Activated CD8-positive, alpha-beta T cell treated with anti-CD3 and anti-CD28 coated beads for 36 hours (primary cell): ENCODE measurements at regions of chr11 and their contacts with region 1.

Region 1: DNA sequence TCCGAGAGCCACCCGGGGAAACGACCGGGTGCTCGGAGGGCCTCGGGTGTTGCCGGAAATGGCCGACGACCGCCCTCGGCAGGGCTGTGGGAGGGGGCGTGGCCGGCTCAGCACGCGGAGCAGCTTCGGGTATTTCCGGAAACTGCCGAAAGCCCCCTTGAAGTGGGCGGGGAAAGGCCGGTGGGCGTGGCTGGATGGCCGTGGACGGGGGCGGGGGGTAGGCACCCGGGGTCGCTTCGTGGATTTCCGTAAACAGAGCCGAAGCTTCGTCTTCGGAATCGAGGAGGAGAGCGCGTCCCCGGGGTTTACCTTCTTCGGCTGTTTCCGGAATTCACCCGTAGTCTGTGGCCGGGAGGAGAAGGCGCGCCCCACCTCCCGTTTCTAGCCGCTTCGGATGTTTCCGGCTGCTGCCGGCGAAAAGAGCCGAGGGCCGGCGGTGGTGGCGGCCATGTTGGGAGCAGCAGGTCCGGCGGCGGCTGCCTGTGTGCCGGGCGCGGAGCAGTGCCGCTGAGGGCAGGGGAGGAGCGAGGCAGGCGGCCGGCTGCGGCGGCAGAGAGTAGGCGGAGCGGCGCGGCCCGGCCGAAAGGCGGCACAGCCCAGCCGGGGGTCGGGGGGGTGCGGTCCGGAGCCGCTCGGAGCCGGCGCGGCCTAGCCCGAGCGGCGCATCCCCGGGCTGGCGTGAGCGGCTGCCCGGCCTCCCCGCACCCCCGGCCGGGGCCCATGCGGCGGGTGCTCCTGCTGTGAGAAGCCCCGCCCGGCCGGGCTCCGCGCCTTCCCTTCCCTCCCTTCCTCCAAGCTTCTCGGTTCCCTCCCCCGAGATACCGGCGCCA is at the start of gene MARK2:
- DNase-seq: peak; percentile 99
- ATAC-seq: peak; percentile 90
- H3K4me3 Mint-ChIP-seq: peak within 1 kb of the TSS; percentile 98
- H3K27ac Mint-ChIP-seq: peak within 1 kb of the TSS; percentile 93
- H3K4me1 Mint-ChIP-seq: peaks cover 46% of the 10 kb centered on the region
- H3K27me3 Mint-ChIP-seq: no peaks in the 10 kb centered on the region
- CTCF ChIP-seq: no peak
- total RNA-seq, gene MARK2: 23.3 to 24.5 TPM

Region 2: DNA sequence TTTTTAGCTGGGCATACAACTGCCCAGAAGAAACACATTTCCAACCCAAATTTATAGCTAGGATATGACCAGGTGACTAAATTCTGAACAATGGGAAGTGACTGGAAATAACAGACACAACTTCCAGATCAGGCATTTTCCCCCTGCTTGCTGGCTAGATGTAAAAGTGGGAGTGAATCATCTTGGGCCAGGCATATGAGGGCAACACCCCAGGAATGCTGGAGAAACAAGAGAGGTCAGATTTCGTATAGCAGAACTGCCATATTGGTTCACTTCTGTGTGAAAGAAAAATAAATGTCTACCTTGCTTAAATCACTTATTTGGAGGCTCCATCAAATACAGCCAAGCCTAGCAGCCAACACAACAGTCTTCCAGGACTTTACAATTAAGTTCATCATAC is 175.1 kb before region 1 on chr11:
- CTCF ChIA-PET with region 1: no interaction called
- POLR2A ChIA-PET with region 1: no interaction called
- intact Hi-C with region 1: no loop called
- DNase-seq: no peak
- ATAC-seq: no peak
- H3K4me3 Mint-ChIP-seq: no peak overlapping the region
- H3K27ac Mint-ChIP-seq: no peak overlapping the region
- H3K4me1 Mint-ChIP-seq: peaks cover 31% of the 10 kb centered on the region
- H3K27me3 Mint-ChIP-seq: no peaks in the 10 kb centered on the region
- CTCF ChIP-seq: no peak

Region 3: DNA sequence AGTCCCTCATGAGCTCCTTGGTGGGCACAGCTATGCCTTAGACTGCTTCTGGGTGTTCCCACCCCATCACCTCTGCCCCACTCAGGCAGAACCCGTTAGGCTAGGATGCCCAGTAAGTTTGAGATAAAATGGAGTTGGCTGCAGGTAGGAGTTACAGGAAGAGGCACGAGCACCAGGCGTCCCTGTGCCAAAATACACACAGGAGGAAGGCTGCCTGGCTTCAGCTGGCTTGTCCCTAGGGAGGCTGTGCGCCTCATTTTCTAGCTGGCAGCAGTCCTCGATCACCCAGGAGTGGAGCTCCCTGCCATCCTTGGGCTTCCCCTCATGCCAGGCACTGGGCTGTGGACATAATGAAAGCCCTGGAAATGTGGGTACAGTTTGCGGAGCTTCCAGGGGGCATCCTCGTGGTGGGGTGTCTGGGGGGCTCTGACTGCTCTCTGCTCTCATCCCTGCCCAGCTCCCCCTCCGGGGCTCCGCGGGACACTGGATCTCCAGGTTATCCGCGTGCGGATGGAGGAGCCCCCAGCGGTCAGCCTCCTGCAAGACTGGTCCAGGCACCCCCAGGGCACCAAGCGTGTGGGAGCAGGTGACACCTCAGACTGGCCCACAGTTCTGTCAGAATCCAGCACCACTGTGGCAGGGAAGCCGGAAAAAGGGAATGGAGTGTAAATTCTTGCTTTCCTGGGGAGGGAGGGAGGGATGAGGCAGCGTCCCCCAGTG is 12.3 kb before region 1 on chr11:
- CTCF ChIA-PET with region 1: interaction called, 13 read pairs
- POLR2A ChIA-PET with region 1: no interaction called
- intact Hi-C with region 1: no loop called
- DNase-seq: no peak
- ATAC-seq: no peak
- H3K4me3 Mint-ChIP-seq: no peak overlapping the region
- H3K27ac Mint-ChIP-seq: no peak overlapping the region
- H3K4me1 Mint-ChIP-seq: no peaks in the 10 kb centered on the region
- H3K27me3 Mint-ChIP-seq: no peaks in the 10 kb centered on the region
- CTCF ChIP-seq: no peak

Region 4: GRCh38 chr11:63871962-63872799 is 33.3 kb after region 1 on chr11:
- CTCF ChIA-PET with region 1: interaction called, 15 read pairs
- POLR2A ChIA-PET with region 1: interaction called, 3 read pairs
- intact Hi-C with region 1: loop called (anchors 5 kb)
- DNase-seq: peak; percentile 61
- ATAC-seq: peak; percentile 85
- H3K4me3 Mint-ChIP-seq: no peak overlapping the region
- H3K27ac Mint-ChIP-seq: peak overlapping the region; percentile 45
- H3K4me1 Mint-ChIP-seq: peaks cover 84% of the 10 kb centered on the region
- H3K27me3 Mint-ChIP-seq: no peaks in the 10 kb centered on the region
- CTCF ChIP-seq: no peak

Region 5: DNA sequence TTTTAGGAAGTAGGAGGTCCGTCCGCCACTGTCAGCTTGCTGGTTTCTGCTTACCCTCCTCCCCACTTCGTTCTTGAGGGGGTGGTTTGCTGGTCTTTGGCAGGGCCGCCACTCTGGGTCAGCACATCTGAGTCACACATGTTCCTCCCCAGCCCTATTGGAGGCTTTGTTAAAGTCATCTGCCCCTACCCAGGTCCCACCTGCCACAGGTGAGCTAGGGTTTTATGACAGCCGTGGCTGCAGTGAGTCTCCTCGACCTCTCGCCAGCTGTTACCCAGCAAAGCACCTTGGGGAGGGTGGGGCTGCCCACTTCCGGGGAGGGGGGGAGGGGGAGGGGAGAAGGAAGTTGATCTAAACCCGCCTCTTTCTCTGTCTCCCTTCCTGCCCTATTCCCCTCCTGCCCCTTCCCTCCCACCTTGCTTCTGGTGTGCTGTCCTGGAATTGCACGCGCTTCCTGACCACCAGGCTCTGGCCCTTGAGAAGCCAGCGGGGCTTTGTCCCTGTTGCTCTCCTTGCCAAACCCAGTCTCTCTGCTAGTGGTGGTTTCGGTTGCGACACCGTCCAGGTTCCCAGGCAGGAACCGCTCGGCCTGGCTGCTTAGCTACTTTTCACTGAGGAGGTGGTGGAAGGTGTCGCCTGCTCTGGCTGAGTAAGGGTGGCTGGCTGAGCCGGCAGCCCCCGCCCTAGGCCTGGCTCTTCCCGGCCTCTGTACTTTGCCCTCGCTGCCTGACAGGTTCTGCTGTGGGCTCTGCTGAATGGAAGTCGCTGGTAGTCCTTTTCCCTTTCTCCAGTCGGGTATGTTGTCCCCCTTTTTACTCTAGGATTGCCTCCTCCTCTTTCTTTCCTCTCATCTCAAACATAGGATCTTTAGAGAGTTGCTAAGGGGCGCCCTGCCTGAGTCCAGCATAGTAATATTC is 49.5 kb after region 1 on chr11:
- CTCF ChIA-PET with region 1: interaction called, 23 read pairs
- POLR2A ChIA-PET with region 1: interaction called, 9 read pairs
- intact Hi-C with region 1: loop called (anchors 10 kb)
- DNase-seq: peak; percentile 77
- ATAC-seq: peak; percentile 80
- H3K4me3 Mint-ChIP-seq: peak overlapping the region; percentile 86
- H3K27ac Mint-ChIP-seq: peak overlapping the region; percentile 93
- H3K4me1 Mint-ChIP-seq: peaks cover 75% of the 10 kb centered on the region
- H3K27me3 Mint-ChIP-seq: no peaks in the 10 kb centered on the region
- CTCF ChIP-seq: no peak

Region 6: DNA sequence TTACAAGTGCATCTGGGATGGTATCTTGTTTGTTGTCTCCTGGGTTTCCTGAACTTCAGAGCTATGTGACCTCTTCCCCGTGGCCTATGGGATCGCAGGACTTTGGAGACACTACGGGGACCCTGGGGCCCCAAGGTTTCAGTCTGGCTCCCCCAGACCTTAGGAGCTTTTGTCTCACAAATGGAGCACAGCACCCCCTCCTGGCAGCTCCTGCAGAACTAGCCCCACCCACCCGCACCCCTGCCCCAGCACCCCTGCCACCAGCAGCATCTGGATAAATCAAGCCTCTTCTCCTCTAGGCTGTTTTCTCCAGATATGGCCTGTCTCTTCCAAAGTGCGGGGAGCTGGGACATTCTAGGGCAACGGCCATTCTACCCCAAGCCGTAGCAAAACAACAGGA is 67.7 kb after region 1 on chr11:
- CTCF ChIA-PET with region 1: interaction called, 38 read pairs
- POLR2A ChIA-PET with region 1: interaction called, 9 read pairs
- intact Hi-C with region 1: no loop called
- DNase-seq: peak; percentile 70
- ATAC-seq: peak; percentile 74
- H3K4me3 Mint-ChIP-seq: no peak overlapping the region
- H3K27ac Mint-ChIP-seq: no peak overlapping the region
- H3K4me1 Mint-ChIP-seq: peaks cover 2% of the 10 kb centered on the region
- H3K27me3 Mint-ChIP-seq: no peaks in the 10 kb centered on the region
- CTCF ChIP-seq: peak; percentile 59

Region 7: DNA sequence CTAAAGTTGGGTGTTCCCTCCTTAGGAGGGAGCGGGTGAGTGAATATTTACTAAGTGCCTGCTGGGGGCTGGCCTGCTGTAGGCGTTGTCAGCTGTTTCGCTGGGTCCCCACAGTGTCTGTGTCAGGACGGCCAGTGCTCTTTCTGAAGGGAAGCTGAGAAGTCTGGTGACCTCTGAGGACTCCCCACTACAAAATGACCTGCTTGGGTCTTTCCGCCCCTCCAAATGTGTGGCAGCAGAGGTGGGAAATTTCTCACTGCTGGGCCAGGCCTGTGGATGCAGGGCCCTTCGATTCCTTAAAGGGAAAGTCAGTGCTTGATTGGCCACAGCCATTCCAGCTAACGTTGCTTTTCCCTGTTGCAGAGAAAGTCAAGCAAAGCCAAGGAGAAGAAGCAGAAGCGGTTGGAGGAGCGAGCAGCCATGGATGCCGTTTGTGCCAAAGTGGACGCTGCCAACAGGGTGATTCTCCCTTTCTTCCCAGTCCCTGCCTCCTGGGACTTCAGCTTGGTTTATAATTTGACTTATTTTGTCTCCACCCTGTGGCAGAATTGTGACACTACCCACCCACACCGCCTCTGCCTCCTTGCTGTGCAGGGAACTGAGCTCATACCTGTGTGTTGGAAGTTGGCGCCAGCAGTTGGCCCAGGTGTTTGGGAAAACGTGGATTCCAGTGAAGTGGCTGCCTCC is 106.7 kb after region 1 on chr11:
- CTCF ChIA-PET with region 1: interaction called, 146 read pairs
- POLR2A ChIA-PET with region 1: no interaction called
- intact Hi-C with region 1: loop called (anchors 2 kb)
- DNase-seq: peak; percentile 72
- ATAC-seq: peak; percentile 84
- H3K4me3 Mint-ChIP-seq: no peak overlapping the region
- H3K27ac Mint-ChIP-seq: no peak overlapping the region
- H3K4me1 Mint-ChIP-seq: peaks cover 13% of the 10 kb centered on the region
- H3K27me3 Mint-ChIP-seq: no peaks in the 10 kb centered on the region
- CTCF ChIP-seq: peak; percentile 71

Region 8: DNA sequence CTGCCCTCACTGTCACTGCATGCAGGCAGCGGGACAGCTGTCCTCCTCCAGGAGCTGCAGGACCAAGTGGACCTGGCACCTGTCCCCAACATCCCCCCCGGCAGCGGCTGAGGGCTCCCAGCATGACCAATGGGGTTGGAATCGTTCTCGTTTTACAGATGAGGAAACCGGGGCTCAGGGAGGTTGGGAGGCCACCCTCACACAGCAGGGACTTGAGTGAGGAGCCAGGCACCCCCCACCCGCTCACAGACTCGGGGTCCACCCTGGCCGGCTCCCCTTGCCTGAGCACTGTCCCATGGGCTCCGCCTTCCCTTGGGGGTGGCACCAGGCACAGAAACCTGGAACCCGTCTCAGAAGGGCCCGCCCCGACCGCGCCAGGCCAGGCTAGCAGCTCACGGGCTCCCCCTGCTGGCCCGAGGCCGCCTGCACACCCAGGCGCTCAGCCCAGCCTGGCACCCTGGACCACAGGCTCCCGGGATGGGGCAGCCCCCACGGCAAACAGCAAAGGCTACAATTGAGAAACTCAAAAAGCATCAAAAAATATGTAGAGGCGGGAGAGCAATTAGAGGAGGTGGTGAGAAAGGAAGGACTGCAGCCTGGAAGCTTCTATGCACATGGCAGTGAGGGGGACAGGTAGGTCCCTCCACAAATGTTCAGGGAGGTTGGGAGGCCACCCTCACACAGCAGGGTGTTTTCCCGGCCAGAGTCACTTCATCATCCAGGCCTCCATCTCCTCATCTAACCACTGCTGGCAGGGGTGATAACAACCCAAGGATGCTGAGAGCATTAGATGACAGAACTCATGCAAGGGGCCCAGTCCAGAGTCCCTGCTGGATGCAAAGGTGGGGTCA is 314.2 kb after region 1 on chr11:
- CTCF ChIA-PET with region 1: interaction called, 12 read pairs
- POLR2A ChIA-PET with region 1: no interaction called
- intact Hi-C with region 1: loop called (anchors 10 kb)
- DNase-seq: peak; percentile 77
- ATAC-seq: peak; percentile 98
- H3K4me3 Mint-ChIP-seq: no peak overlapping the region
- H3K27ac Mint-ChIP-seq: no peak overlapping the region
- H3K4me1 Mint-ChIP-seq: peaks cover 4% of the 10 kb centered on the region
- H3K27me3 Mint-ChIP-seq: no peaks in the 10 kb centered on the region
- CTCF ChIP-seq: peak; percentile 99